ENCODE measurements at regions of chr6 and their contacts with region 1.

Region 1: GRCh38 chr6:116010790-116011401 is 49.8 kb downstream of the FRK start:
- DNase-seq: peak; percentile 73
- H3K4me3 ChIP-seq: no peak overlapping the region
- H3K27ac ChIP-seq: no peak overlapping the region
- H3K4me1 ChIP-seq: peaks cover 0 to 9% (median 0%) of the 10 kb centered on the region in 6 donors
- H3K27me3 ChIP-seq: no peaks in the 10 kb centered on the region
- CTCF ChIP-seq: peak; percentile 53 to 87 (median 77)
- POLR2A ChIP-seq: no peak

Region 2: DNA sequence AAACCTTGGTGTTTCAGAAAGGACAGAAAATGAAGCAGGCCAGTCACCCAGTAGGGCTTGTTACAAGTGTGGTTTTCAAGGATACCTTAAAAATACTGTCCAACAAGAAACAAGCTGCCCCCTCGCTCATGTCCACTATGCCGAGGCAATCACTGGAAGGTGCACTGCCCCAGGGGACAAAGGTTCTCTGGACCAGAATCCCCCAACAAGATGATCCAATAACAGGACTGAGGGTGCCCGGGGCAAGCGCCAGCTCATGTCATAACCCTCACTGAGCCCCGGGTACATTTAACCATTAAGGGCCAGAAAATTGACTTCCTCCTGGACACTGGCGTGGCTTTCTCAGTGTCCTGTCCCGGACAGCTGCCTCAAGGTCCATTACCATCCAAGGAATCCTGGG is 83.1 kb after region 1 on chr6:
- intact Hi-C with region 1: loop called (anchors 2 kb)
- DNase-seq: no peak
- H3K4me3 ChIP-seq: no peak overlapping the region
- H3K27ac ChIP-seq: no peak overlapping the region
- H3K4me1 ChIP-seq: peaks cover 0 to 2% (median 0%) of the 10 kb centered on the region in 6 donors
- H3K27me3 ChIP-seq: no peaks in the 10 kb centered on the region
- CTCF ChIP-seq: no peak
- POLR2A ChIP-seq: no peak

Region 3: GRCh38 chr6:116111552-116112528 is 100.9 kb after region 1 on chr6:
- intact Hi-C with region 1: no loop called
- DNase-seq: no peak
- H3K4me3 ChIP-seq: no peak overlapping the region
- H3K27ac ChIP-seq: no peak overlapping the region
- H3K4me1 ChIP-seq: peaks cover 0 to 15% (median 2%) of the 10 kb centered on the region in 6 donors
- H3K27me3 ChIP-seq: no peaks in the 10 kb centered on the region
- CTCF ChIP-seq: peak in 5 of 11 experiments; percentile 30 to 47 (median 36)
- POLR2A ChIP-seq: no peak